ENCODE measurements at regions of chr7 and their contacts with region 1.

Region 1: DNA sequence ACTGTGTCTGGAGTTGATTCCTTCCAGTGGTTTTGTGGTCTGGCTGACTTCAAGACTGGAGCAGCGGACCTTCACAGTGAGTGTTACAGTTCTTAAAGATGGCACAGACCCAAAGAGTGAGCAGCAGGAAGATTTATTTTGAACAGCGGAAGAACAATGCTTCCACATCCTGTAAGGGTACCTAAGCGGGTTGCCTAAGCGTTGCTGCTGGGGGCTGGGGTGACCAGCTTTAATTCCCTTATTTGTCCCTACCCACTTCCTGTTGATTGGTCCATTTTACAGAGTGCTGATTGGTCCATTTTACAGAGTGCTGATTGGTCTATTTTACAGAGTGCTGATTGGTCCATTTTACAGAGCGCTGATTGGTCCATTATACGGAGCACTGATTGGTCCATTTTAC is 13.2 kb downstream of the AKR1B15 start:
- DNase-seq: peak; percentile 48
- ATAC-seq: no peak
- H3K4me3 ChIP-seq: no peak overlapping the region
- H3K27ac ChIP-seq: peak overlapping the region; percentile 99
- H3K4me1 ChIP-seq: peaks cover 57% of the 10 kb centered on the region
- H3K27me3 ChIP-seq: no peaks in the 10 kb centered on the region
- CTCF ChIP-seq: no peak

Region 2: DNA sequence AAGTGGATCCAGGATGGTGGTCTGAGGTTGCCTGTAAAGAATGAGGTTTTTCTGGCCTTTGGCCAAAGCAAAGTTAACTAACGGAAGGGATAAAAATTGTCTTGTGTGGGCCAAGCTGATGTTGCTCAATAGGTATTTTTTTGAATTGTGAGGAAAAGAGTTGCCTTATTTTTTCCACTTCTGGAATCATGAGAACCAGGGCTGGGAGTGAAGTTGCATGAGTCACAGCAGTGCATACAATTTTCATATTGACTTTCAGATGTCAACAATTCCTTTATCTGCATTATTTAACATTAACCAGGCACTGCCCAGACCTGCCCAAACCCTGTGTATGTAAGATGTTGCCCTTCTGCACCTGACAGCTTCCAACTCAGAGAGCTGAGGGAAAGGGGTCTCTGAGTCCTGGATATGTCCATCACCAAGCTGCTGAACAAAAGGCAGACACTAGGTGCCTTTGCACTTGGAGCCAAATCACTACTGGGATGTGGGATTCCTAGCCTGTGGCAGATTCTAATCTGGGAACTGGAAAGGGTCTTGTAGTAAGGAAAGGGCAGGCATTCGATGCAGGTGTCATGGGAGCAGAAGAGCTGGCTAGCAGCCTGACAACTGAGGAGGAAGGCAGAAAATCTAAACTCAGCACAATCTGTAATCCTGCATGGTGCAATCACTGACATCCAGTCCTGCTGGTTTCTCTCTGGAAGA is 193.1 kb before region 1 on chr7:
- CTCF ChIA-PET with region 1: no interaction called
- POLR2A ChIA-PET with region 1: no interaction called
- intact Hi-C with region 1: loop called (anchors 1 kb)
- DNase-seq: peak; percentile 95
- ATAC-seq: peak; percentile 68
- H3K4me3 ChIP-seq: peak overlapping the region; percentile 37; the same call in 1 of the 2 replicates
- H3K27ac ChIP-seq: peak overlapping the region; percentile 96
- H3K4me1 ChIP-seq: peaks cover 55% of the 10 kb centered on the region
- H3K27me3 ChIP-seq: no peaks in the 10 kb centered on the region
- CTCF ChIP-seq: no peak

Region 3: DNA sequence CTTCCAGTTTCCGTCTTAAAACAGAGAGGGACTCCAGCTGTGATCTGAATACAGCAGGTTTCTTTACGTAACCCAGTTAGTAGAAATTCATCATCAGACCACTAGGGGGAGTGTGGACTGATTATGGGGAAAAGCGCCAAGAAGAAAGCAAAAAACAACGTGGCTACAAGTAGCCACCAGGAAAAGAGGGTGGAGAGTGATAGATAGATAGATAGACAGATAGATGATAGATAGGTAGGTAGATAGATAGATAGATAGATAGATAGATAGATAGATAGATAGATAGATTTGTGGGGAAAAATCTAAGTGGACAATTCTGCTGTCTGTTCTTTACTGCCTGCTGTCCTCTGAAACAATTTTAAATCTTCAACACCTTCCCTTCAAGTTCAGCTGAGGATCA is 47.5 kb before region 1 on chr7:
- CTCF ChIA-PET with region 1: no interaction called
- POLR2A ChIA-PET with region 1: no interaction called
- intact Hi-C with region 1: loop called (anchors 1 kb)
- DNase-seq: peak; percentile 93
- ATAC-seq: peak; percentile 4; the same call in 1 of the 2 replicates
- H3K4me3 ChIP-seq: no peak overlapping the region
- H3K27ac ChIP-seq: peak overlapping the region; percentile 96
- H3K4me1 ChIP-seq: peaks cover 55% of the 10 kb centered on the region
- H3K27me3 ChIP-seq: no peaks in the 10 kb centered on the region
- CTCF ChIP-seq: peak; percentile 80

Region 4: DNA sequence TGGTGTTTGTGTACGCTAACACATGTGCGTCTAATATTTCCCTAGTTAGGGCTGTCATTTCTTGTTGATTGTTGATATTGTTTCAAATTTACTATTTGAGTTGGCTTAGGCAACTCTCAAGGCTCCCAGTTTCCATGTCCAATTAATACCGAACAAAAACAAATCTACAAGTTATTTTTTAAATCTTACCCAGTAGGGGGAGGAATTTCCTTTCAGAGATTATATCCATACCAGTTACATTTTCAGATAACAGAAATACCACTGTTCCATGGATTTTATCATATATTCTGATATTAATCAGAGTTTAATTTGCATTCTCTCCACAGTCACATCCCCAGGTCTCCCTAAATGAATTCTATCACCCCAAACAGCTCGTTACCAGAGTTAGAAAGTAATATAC is 42.0 kb before region 1 on chr7:
- CTCF ChIA-PET with region 1: no interaction called
- POLR2A ChIA-PET with region 1: no interaction called
- intact Hi-C with region 1: loop called (anchors 1 kb)
- DNase-seq: peak; percentile 42
- ATAC-seq: no peak; the same call in 1 of the 2 replicates
- H3K4me3 ChIP-seq: peak overlapping the region; percentile 60
- H3K27ac ChIP-seq: no peak overlapping the region
- H3K4me1 ChIP-seq: peaks cover 37% of the 10 kb centered on the region
- H3K27me3 ChIP-seq: no peaks in the 10 kb centered on the region
- CTCF ChIP-seq: no peak; the same call in 1 of the 2 replicates

Region 5: DNA sequence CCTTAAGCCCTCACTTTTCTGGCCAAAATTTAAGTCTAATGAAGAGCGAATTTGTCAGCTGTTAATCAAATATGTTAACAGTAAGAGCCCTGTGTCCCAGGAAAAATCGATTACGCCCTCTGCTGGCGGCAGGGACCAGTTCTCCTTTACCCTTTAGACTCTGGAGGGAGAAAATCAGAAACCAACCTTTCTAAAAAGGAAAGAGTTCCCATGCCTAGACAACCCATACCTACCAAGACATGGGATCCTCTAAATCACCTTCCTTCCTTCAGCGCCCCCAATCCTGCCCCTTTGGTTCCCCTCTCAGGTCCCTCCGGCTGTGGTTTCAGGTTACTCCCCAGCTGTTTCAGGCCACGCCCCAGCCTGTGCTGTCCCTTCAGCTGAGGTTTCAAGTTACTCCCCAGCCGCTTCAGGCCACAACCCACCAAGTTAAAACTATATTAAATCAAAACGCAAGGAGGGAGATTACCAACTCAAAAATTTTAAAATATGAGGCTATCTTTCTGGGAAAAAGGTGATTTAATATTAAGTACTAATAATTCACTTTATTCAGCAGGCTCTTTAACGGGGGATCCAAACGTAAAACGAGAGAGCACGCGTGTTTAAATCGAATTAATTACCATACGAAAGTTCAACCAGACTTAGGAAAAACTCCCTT is 14.6 kb before region 1 on chr7:
- CTCF ChIA-PET with region 1: no interaction called
- POLR2A ChIA-PET with region 1: no interaction called
- intact Hi-C with region 1: loop called (anchors 1 kb)
- DNase-seq: peak; percentile 74
- ATAC-seq: peak; percentile 94
- H3K4me3 ChIP-seq: peak overlapping the region; percentile 62
- H3K27ac ChIP-seq: peak overlapping the region; percentile 43
- H3K4me1 ChIP-seq: peaks cover 28% of the 10 kb centered on the region
- H3K27me3 ChIP-seq: no peaks in the 10 kb centered on the region
- CTCF ChIP-seq: peak; percentile 96

Region 6: GRCh38 chr7:134593530-134594392 is 31.6 kb after region 1 on chr7:
- CTCF ChIA-PET with region 1: no interaction called
- POLR2A ChIA-PET with region 1: no interaction called
- intact Hi-C with region 1: no loop called
- DNase-seq: peak; percentile 63
- ATAC-seq: peak; percentile 63
- H3K4me3 ChIP-seq: no peak overlapping the region
- H3K27ac ChIP-seq: peak overlapping the region; percentile 81
- H3K4me1 ChIP-seq: peaks cover 22% of the 10 kb centered on the region
- H3K27me3 ChIP-seq: no peaks in the 10 kb centered on the region
- CTCF ChIP-seq: no peak

Region 7: DNA sequence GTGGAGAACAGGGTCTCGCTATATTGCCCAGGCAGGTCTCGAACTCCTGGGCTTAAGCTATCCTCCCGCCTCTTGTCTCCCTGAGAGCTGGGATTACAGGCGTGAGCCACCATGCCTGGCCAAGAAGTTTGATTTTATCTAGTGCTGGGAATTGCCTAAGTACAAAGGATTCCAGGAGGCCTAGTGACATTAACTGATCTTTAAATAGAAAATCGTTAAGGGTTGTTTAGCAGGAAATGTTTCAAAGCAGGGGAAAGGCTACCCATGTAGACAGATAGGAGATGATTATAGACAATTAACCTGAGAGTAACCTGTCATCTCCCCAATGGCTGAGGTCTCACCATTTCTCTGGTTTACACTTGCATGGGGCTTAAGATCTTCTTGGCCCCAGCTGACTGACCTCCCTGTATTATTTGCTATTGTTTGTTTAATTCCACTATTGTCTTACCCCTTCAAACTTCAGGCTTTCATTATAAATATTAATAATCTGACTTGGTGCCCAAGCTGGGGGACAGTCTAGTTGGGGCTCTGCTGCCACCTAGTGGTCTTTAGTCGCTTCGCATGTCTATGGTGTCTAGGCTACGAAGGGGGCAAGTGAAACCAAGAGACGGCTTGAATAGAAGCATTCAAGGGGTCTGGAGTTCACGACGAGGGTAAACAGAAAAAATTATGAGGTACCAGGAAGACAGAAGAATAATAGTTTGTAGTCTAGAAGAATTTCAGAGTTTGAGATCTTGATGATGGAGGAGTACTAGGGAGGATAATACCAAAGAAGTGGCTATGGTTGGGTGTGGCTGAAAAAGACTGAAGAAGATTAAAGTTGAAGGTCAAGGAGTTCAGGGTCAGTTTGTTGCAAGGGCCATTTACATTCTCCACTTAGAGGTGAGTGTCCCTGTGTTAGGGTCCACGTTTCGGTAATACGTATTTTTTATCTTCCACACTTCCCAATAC is 44.1 kb after region 1 on chr7:
- CTCF ChIA-PET with region 1: no interaction called
- POLR2A ChIA-PET with region 1: no interaction called
- intact Hi-C with region 1: loop called (anchors 1 kb)
- DNase-seq: peak; percentile 78
- ATAC-seq: peak; percentile 96
- H3K4me3 ChIP-seq: peak overlapping the region; percentile 24; the same call in 1 of the 2 replicates
- H3K27ac ChIP-seq: peak overlapping the region; percentile 56
- H3K4me1 ChIP-seq: peaks cover 11% of the 10 kb centered on the region
- H3K27me3 ChIP-seq: no peaks in the 10 kb centered on the region
- CTCF ChIP-seq: peak; percentile 96

Region 8: DNA sequence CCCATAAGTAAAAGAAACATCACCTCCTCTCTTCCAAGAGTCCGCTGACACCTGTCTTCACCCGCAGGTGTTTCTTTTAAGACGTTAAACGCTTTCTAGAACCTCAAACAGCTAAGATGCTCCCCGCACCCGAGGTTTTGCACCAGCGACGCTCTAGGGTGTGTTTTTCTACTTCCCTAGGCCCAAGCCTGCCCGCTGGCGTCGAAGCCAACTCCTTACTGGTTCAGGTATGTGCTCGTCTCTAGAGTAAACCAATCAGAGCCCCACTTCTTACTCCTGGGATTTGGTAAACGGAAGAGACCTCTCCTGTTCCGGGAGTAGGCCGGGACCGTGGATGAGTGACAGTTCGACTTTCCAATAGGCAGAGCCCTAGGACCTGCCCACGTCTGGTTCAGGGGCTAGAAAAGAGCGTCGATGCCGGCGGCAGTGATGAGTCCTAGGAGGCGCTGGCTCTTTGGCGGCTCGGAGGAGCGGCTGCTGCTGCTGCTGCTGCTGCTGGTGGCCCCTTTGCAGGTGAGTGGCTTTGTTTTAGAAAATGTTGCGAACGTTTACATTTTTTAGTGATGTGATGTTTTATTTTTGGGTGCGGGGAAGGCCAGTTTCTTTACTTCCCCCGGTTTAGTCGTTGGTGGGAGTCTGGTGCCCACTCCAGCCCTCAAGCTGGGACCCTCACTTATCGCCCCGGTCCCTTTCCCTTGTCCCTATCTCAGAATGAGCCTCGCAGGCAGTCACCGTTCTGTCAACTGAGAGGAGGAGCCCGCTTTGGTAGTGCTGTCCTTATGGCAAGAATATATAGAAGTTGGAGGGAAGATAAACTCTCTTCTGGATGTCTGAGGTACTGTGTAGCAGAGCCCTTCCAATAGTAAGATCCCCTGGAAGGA is 84.5 kb after region 1 on chr7 and contains the start of gene BPGM:
- CTCF ChIA-PET with region 1: no interaction called
- POLR2A ChIA-PET with region 1: no interaction called
- intact Hi-C with region 1: loop called (anchors 1 kb)
- DNase-seq: peak; percentile 99
- ATAC-seq: peak; percentile 99
- H3K4me3 ChIP-seq: peak within 1 kb of the TSS; percentile 95
- H3K27ac ChIP-seq: peak within 1 kb of the TSS; percentile 34
- H3K4me1 ChIP-seq: peaks cover 10% of the 10 kb centered on the region
- H3K27me3 ChIP-seq: no peaks in the 10 kb centered on the region
- CTCF ChIP-seq: peak; percentile 45
- total RNA-seq, gene BPGM: 9.6 and 14.6 TPM in 2 replicates

Measured in PC-3 (cell line).